ENCODE measurements at regions of chr12 and their contacts with region 1.

Region 1: GRCh38 chr12:31850268-31850667 is 108.9 kb upstream of the RESF1 start:
- DNase-seq: no peak
- ATAC-seq: no peak
- H3K4me3 ChIP-seq: no peak overlapping the region
- H3K27ac ChIP-seq: no peak overlapping the region
- H3K4me1 ChIP-seq: no peaks in the 10 kb centered on the region
- H3K27me3 ChIP-seq: no peaks in the 10 kb centered on the region
- CTCF ChIP-seq: no peak

Region 2: DNA sequence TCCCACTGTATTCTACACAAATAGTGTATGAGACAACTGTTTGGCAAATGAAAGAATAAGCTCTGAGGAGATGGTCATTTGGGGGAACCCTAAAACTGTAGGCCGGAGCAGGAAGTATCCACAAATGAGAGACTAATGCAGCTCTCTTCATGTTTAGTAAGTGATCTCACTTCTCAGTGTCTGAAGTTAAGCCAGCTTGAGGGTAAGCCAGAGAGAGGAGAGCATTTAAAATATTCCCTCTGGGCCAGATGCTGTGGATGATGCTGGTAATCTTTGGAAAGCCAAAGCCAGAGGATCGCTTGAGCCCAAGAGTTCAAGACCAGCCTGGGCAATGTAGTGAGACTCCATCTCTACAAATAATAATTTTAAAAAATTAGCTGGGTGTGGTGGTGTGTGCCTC is 393.7 kb before region 1 on chr12:
- CTCF ChIA-PET with region 1: no interaction called
- POLR2A ChIA-PET with region 1: no interaction called
- in situ Hi-C with region 1: no loop called
- intact Hi-C with region 1: no loop called
- DNase-seq: no peak
- ATAC-seq: no peak
- H3K4me3 ChIP-seq: no peak overlapping the region
- H3K27ac ChIP-seq: no peak overlapping the region
- H3K4me1 ChIP-seq: no peaks in the 10 kb centered on the region
- H3K27me3 ChIP-seq: no peaks in the 10 kb centered on the region
- CTCF ChIP-seq: no peak

Region 3: DNA sequence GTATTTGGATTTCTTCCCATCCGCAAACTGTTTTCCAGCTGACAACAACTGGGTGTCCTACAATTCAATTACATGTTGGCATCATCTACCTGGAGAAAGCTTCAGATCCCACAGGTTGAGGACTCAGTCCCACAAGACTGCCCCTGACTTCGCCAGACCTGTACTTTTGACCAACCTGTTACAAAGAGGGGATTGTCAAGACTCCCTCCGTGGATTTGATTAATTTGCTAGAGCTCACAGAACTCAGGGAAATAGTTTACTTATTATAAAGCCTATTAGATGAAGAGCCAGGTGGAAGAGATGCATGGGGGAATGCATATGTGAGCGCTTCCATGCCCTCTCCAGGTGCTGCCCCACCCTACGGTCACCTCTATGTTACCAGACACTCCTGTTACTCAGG is 123.5 kb after region 1 on chr12:
- CTCF ChIA-PET with region 1: no interaction called
- POLR2A ChIA-PET with region 1: interaction called, 11 read pairs
- in situ Hi-C with region 1: no loop called
- intact Hi-C with region 1: no loop called
- DNase-seq: no peak
- ATAC-seq: no peak
- H3K4me3 ChIP-seq: no peak overlapping the region
- H3K27ac ChIP-seq: no peak overlapping the region
- H3K4me1 ChIP-seq: no peaks in the 10 kb centered on the region
- H3K27me3 ChIP-seq: no peaks in the 10 kb centered on the region
- CTCF ChIP-seq: no peak